Caco-2 (cell line): ENCODE measurements at regions of chr3 and their contacts with region 1.

Region 1: DNA sequence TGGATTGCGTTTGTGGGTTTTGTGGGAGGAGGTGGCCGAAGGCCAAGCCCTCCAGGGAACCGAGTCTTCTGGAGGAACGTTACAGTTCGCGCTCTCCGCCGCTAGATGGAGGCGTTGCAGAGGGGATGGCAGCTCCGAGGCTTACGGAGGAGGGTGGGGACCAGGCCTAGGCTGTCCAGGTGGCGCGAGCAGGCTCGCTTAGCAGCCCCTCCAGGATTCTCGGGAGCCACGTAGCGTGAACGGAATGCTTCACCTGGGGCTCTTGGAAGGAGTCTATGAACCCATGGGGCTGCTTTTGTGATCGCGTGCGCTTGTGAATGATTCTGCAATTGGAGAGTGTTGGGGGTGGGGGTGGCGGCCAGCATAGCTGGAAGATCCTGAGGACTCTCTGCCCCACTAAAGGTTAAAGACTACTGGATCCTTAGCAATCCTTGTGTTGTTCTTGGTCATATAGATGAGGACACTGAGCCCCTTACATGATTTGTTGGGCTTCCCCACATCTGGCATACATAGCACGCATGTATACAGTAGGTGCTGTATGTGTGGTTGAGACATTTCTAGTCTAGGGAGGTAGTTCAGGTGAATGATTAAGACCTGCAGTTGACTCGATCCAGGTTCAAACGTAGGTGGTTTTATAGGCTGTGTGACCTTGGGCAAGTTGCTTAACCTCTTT is 25.7 kb downstream of the FAM3D start:
- DNase-seq: peak; percentile 80 to 84
- H3K4me3 ChIP-seq: no peak overlapping the region
- H3K4me3 Mint-ChIP-seq: no peak overlapping the region
- H3K27ac Mint-ChIP-seq: no peak overlapping the region
- H3K4me1 ChIP-seq: no peaks in the 10 kb centered on the region
- H3K4me1 Mint-ChIP-seq: no peaks in the 10 kb centered on the region
- H3K27me3 ChIP-seq: no peaks in the 10 kb centered on the region; the same call in 1 of the 2 replicates
- H3K27me3 Mint-ChIP-seq: no peaks in the 10 kb centered on the region
- CTCF ChIP-seq: peak; percentile 89 to 95

Region 2: DNA sequence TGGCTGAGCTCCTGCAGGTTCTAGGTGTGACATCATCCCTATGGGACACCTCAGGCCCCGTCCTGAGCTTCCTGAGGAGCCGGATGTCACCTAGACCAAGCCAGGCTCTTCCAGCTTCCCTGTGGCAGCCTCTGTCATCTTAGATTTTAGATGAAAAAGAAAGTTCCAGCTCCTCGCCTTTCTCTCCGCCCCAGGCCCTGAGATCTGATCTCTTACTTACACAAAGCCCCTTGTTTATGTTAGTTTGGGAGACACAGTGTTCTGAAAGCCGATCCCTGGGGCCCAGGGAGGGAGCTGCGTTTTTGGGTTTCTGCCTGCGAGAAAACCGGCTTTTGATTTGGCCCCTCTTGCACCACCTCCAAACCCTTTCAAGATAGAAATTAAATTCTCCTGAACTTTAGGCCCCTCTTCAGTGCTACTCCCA is 23.5 kb before region 1 on chr3:
- CTCF ChIA-PET with region 1: no interaction called
- POLR2A ChIA-PET with region 1: no interaction called
- intact Hi-C with region 1: no loop called
- DNase-seq: no peak
- H3K4me3 ChIP-seq: no peak overlapping the region
- H3K4me3 Mint-ChIP-seq: no peak overlapping the region
- H3K27ac Mint-ChIP-seq: no peak overlapping the region
- H3K4me1 ChIP-seq: no peaks in the 10 kb centered on the region
- H3K4me1 Mint-ChIP-seq: no peaks in the 10 kb centered on the region
- H3K27me3 ChIP-seq: no peaks in the 10 kb centered on the region
- H3K27me3 Mint-ChIP-seq: no peaks in the 10 kb centered on the region
- CTCF ChIP-seq: no peak

Region 3: GRCh38 chr3:58659051-58659675 is 18.3 kb after region 1 on chr3:
- CTCF ChIA-PET with region 1: interaction called, 3 read pairs
- POLR2A ChIA-PET with region 1: no interaction called
- intact Hi-C with region 1: loop called (anchors 1 kb)
- DNase-seq: peak; percentile 21 to 37
- H3K4me3 ChIP-seq: no peak overlapping the region
- H3K4me3 Mint-ChIP-seq: no peak overlapping the region
- H3K27ac Mint-ChIP-seq: no peak overlapping the region
- H3K4me1 ChIP-seq: no peaks in the 10 kb centered on the region
- H3K4me1 Mint-ChIP-seq: no peaks in the 10 kb centered on the region
- H3K27me3 ChIP-seq: no peaks in the 10 kb centered on the region
- H3K27me3 Mint-ChIP-seq: peaks cover 12% of the 10 kb centered on the region
- CTCF ChIP-seq: peak in 1 of 2 experiments; percentile 17

Region 4: GRCh38 chr3:58731673-58732072 is 90.8 kb after region 1 on chr3:
- CTCF ChIA-PET with region 1: no interaction called
- POLR2A ChIA-PET with region 1: no interaction called
- intact Hi-C with region 1: loop called (anchors 2 kb)
- DNase-seq: no peak
- H3K4me3 ChIP-seq: no peak overlapping the region
- H3K4me3 Mint-ChIP-seq: no peak overlapping the region
- H3K27ac Mint-ChIP-seq: no peak overlapping the region
- H3K4me1 ChIP-seq: no peaks in the 10 kb centered on the region
- H3K4me1 Mint-ChIP-seq: no peaks in the 10 kb centered on the region
- H3K27me3 ChIP-seq: no peaks in the 10 kb centered on the region
- H3K27me3 Mint-ChIP-seq: peaks cover 8% of the 10 kb centered on the region
- CTCF ChIP-seq: no peak

Region 5: GRCh38 chr3:58994746-58995330 is 354.0 kb after region 1 on chr3:
- CTCF ChIA-PET with region 1: no interaction called
- POLR2A ChIA-PET with region 1: no interaction called
- intact Hi-C with region 1: loop called (anchors 2 kb)
- DNase-seq: peak; percentile 43 to 63
- H3K4me3 ChIP-seq: no peak overlapping the region
- H3K4me3 Mint-ChIP-seq: no peak overlapping the region
- H3K27ac Mint-ChIP-seq: no peak overlapping the region
- H3K4me1 ChIP-seq: no peaks in the 10 kb centered on the region
- H3K4me1 Mint-ChIP-seq: no peaks in the 10 kb centered on the region
- H3K27me3 ChIP-seq: no peaks in the 10 kb centered on the region
- H3K27me3 Mint-ChIP-seq: no peaks in the 10 kb centered on the region
- CTCF ChIP-seq: peak; percentile 63 to 80

Region 6: DNA sequence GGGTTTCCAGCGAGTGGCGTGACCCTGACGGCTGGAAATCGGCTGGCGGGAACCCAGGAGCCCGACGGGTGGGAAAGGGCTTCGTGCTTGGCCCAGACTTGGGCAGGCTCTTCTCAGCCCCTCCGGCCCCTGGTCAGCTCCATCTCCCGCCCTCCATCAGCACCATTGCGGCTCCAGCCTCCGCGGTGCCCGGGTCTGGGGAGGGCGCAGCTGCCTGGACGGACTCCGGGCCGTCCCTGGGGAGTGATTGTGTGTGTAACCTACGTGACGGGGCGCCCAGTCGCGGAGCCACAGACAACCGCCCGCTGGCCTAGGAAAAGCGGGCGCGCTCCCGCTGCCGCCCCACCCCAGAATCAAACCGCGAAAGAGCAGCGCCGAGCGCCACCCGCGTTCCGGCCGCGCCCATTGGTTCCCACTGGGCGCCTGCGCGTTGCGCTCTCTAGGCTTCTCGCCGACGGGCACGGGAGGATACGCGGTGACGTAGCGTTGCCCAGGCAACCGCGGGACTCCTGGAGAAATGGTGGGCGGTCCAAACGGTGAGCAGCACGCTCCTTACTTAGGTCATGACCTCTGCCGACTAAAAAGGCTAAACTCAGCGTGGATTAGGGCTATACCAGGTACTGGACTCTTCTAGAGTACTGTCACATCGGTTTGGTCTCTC is 409.0 kb after region 1 on chr3 and contains the start of gene CFAP20DC:
- CTCF ChIA-PET with region 1: interaction called, 8 read pairs
- POLR2A ChIA-PET with region 1: no interaction called
- intact Hi-C with region 1: loop called (anchors 1 kb)
- DNase-seq: peak; percentile 92 to 93
- H3K4me3 ChIP-seq: peak within 1 kb of the TSS; percentile 74
- H3K4me3 Mint-ChIP-seq: peak within 1 kb of the TSS; percentile 54
- H3K27ac Mint-ChIP-seq: peak within 1 kb of the TSS; percentile 55
- H3K4me1 ChIP-seq: peaks cover 5% of the 10 kb centered on the region
- H3K4me1 Mint-ChIP-seq: no peaks in the 10 kb centered on the region
- H3K27me3 ChIP-seq: no peaks in the 10 kb centered on the region; the same call in 1 of the 2 replicates
- H3K27me3 Mint-ChIP-seq: no peaks in the 10 kb centered on the region
- CTCF ChIP-seq: no peak
- total RNA-seq, gene CFAP20DC: 2.2 and 2.8 TPM in 2 replicates